Heart right ventricle (tissue), 16 donors: ENCODE measurements at regions of chr15 and their contacts with region 1.

Region 1: DNA sequence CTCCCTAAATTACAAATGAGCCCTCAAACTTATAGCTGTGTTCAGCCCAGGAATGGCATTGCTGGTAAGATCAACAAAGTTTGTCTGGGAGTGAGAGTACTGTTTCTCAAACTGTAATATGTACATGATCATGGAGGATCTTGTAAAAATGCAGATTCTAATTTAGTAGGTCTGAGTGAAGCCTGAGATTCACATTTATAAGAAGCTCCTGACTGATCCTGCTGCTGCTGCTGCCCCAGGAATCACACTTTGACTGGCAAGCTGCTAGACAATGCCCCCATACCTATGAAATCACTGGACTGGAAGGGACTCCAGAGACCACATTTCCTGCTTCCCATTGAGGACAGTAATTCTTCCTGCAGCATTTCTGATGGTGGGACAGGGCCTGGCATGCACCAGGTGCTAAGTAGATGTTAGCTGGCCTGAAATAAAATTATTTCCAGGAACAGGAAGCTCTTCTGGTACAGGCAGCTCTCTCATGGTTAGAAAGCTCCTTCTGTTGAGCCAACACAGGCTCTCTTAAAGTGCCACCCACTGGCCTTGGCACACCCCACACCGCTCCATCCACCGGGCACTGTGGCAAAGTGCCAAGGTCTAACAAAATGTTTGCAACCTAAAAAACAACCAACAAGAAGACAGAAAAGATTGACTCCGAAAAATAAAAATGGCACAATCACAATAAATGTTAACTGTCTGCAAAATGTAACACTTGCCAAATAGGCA is 36.7 kb upstream of the ZNF710 start:
- DNase-seq: no peak
- ATAC-seq: peak in 5 of 8 donors; percentile 56 to 81 (median 68)
- H3K4me3 ChIP-seq: no peak overlapping the region
- H3K27ac ChIP-seq: no peak overlapping the region
- H3K4me1 ChIP-seq: peaks cover 0 to 19% (median 0%) of the 10 kb centered on the region in 9 donors
- H3K27me3 ChIP-seq: no peaks in the 10 kb centered on the region
- CTCF ChIP-seq: no peak

Region 2: GRCh38 chr15:89874926-89875564 is 89.3 kb before region 1 on chr15:
- intact Hi-C with region 1: no loop called
- DNase-seq: peak; percentile 75 to 84
- ATAC-seq: peak; percentile 82 to 94 (median 92)
- H3K4me3 ChIP-seq: no peak overlapping the region
- H3K27ac ChIP-seq: peak overlapping the region in 1 of 10 donors; percentile 72
- H3K4me1 ChIP-seq: peaks cover 0 to 34% (median 5%) of the 10 kb centered on the region in 9 donors
- H3K27me3 ChIP-seq: no peaks in the 10 kb centered on the region
- CTCF ChIP-seq: peak; percentile 82 to 98 (median 94)

Region 3: DNA sequence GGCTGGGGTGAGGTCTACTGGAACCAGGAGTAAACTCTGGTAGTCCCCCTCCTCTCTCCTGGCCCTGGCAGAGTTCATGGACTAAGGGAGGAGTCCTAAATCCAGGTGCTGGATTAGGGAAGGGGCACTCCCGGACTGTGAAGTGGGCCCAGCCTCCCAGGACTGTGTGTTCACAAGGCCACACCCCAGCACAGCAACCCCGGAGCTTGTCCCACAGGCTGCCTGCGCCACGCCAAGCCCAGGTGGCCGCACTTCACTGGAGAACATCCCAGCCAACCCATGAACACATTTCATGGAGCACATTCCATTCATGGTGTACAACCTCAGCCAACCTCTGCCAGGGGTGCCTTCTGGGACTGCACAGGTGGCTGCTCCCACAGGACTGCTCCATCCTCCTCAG is 59.9 kb before region 1 on chr15:
- intact Hi-C with region 1: loop called in 1 of 10 experiments (anchors 5 kb)
- DNase-seq: no peak
- ATAC-seq: no peak
- H3K4me3 ChIP-seq: no peak overlapping the region
- H3K27ac ChIP-seq: no peak overlapping the region
- H3K4me1 ChIP-seq: peaks cover 0 to 15% (median 4%) of the 10 kb centered on the region in 9 donors
- H3K27me3 ChIP-seq: no peaks in the 10 kb centered on the region
- CTCF ChIP-seq: no peak

Region 4: GRCh38 chr15:89912674-89913396 is 51.6 kb before region 1 on chr15 and contains the start of gene ARPIN:
- intact Hi-C with region 1: loop called in 1 of 10 experiments (anchors 5 kb)
- DNase-seq: peak; percentile 56 to 72
- ATAC-seq: peak; percentile 81 to 93 (median 90)
- H3K4me3 ChIP-seq: peak within 1 kb of the TSS; percentile 53 to 95 (median 81)
- H3K27ac ChIP-seq: peak within 1 kb of the TSS in 9 of 10 donors; percentile 76 to 89 (median 81)
- H3K4me1 ChIP-seq: peaks cover 5 to 24% (median 16%) of the 10 kb centered on the region in 9 donors
- H3K27me3 ChIP-seq: peaks cover 0 to 9% (median 0%) of the 10 kb centered on the region in 7 donors
- CTCF ChIP-seq: peak in 2 of 9 donors; percentile 6 to 10
- total RNA-seq, gene ARPIN: 7.7 to 12.8 (median 11.3) TPM